ENCODE measurements at regions of chr13 and their contacts with region 1.

Region 1: DNA sequence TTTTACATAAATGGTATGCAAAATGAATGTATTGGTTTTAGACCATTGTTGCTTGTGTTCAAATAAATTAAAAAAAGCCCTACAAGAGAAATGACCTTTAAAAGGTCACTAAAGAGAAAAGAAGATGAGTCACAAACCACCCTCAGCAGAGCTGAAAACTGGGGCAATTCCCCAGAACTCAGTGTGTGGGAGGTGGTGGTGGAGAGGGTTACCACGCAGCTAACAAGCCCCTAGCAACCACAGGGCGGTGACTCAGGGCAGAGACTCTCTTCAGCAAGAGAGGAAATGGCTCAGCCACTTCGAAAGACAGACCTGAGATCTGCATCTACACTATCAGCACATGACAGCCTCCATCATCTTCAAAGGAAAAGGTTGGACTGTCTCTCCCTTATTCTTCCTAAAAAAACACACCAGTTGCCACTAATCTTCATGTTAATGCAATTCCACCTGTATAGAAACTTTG is 29.4 kb upstream of the NDFIP2 start:
- DNase-seq: peak; percentile 17 to 90 (median 51)
- ATAC-seq: peak; percentile 99
- H3K4me3 ChIP-seq: no peak overlapping the region
- H3K4me3 Mint-ChIP-seq: peak overlapping the region in 8 of 10 donors; percentile 10 to 84 (median 32)
- H3K27ac ChIP-seq: no peak overlapping the region
- H3K27ac Mint-ChIP-seq: peak overlapping the region; percentile 1 to 92 (median 43)
- H3K4me1 ChIP-seq: peaks cover 19 to 28% of the 10 kb centered on the region in 2 donors
- H3K4me1 Mint-ChIP-seq: peaks cover 24 to 64% (median 46%) of the 10 kb centered on the region in 7 donors
- H3K27me3 ChIP-seq: no peaks in the 10 kb centered on the region
- H3K27me3 Mint-ChIP-seq: no peaks in the 10 kb centered on the region

Region 2: GRCh38 chr13:79405829-79406596 is 45.5 kb before region 1 on chr13 and contains the start of gene RBM26:
- CTCF ChIA-PET with region 1: no interaction called
- POLR2A ChIA-PET with region 1: interaction called, 3 read pairs
- intact Hi-C with region 1: loop called in 1 of 2 experiments (anchors 1 kb)
- DNase-seq: peak; percentile 87 to 96 (median 93)
- ATAC-seq: peak; percentile 92
- H3K4me3 ChIP-seq: peak within 1 kb of the TSS; percentile 93
- H3K4me3 Mint-ChIP-seq: peak within 1 kb of the TSS in 5 of 10 donors; percentile 93 to 97 (median 95)
- H3K27ac ChIP-seq: peak within 1 kb of the TSS; percentile 91
- H3K27ac Mint-ChIP-seq: peak within 1 kb of the TSS in 5 of 9 donors; percentile 97 to 99 (median 99)
- H3K4me1 ChIP-seq: peaks cover 33 to 44% of the 10 kb centered on the region in 2 donors
- H3K4me1 Mint-ChIP-seq: peaks cover 31 to 49% (median 36%) of the 10 kb centered on the region in 7 donors
- H3K27me3 ChIP-seq: no peaks in the 10 kb centered on the region
- H3K27me3 Mint-ChIP-seq: no peaks in the 10 kb centered on the region
- total RNA-seq, gene RBM26: 75.4 to 136 (median 85.2) TPM

Region 3: DNA sequence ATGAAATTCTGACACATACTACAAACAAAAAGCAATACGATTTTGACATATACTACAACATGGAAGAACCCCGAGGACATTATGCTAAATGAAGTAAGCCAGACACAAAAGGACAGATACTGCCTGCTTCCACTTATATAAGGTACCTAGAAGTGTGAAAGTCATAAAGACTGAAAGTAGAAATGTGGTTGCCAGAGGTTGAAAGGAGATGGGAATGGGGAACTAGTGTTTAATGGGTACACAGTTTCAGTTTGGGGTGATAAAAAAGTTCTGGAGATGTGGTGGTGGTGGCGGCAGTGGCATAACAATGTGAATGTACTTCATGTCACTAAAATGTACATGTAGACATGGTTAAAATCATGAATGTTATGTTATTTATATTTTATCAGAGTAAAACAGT is 17.3 kb after region 1 on chr13:
- CTCF ChIA-PET with region 1: no interaction called
- POLR2A ChIA-PET with region 1: no interaction called
- intact Hi-C with region 1: no loop called
- DNase-seq: no peak
- ATAC-seq: no peak
- H3K4me3 ChIP-seq: no peak overlapping the region
- H3K4me3 Mint-ChIP-seq: peak overlapping the region in 1 of 10 donors; percentile 3
- H3K27ac ChIP-seq: no peak overlapping the region
- H3K27ac Mint-ChIP-seq: no peak overlapping the region
- H3K4me1 ChIP-seq: no peaks in the 10 kb centered on the region
- H3K4me1 Mint-ChIP-seq: peaks cover 0 to 17% (median 0%) of the 10 kb centered on the region in 7 donors
- H3K27me3 ChIP-seq: no peaks in the 10 kb centered on the region
- H3K27me3 Mint-ChIP-seq: peaks cover 0 to 3% (median 0%) of the 10 kb centered on the region in 5 donors

Region 4: GRCh38 chr13:79491715-79492114 is 40.2 kb after region 1 on chr13:
- CTCF ChIA-PET with region 1: no interaction called
- POLR2A ChIA-PET with region 1: no interaction called
- intact Hi-C with region 1: loop called (anchors 1 to 2 kb)
- DNase-seq: no peak
- ATAC-seq: no peak
- H3K4me3 ChIP-seq: no peak overlapping the region
- H3K4me3 Mint-ChIP-seq: peak overlapping the region in 8 of 10 donors; percentile 58 to 86 (median 68)
- H3K27ac ChIP-seq: no peak overlapping the region
- H3K27ac Mint-ChIP-seq: peak overlapping the region in 8 of 9 donors; percentile 2 to 93 (median 27)
- H3K4me1 ChIP-seq: peaks cover 0 to 17% of the 10 kb centered on the region in 2 donors
- H3K4me1 Mint-ChIP-seq: peaks cover 28 to 87% (median 78%) of the 10 kb centered on the region in 7 donors
- H3K27me3 ChIP-seq: no peaks in the 10 kb centered on the region
- H3K27me3 Mint-ChIP-seq: no peaks in the 10 kb centered on the region

Region 5: GRCh38 chr13:79522583-79522982 is 71.1 kb after region 1 on chr13:
- CTCF ChIA-PET with region 1: no interaction called
- POLR2A ChIA-PET with region 1: no interaction called
- intact Hi-C with region 1: loop called in 1 of 2 experiments (anchors 1 kb)
- DNase-seq: peak in 1 of 9 donors; percentile 40
- ATAC-seq: peak; percentile 74
- H3K4me3 ChIP-seq: no peak overlapping the region
- H3K4me3 Mint-ChIP-seq: peak overlapping the region in 1 of 10 donors; percentile 84
- H3K27ac ChIP-seq: no peak overlapping the region
- H3K27ac Mint-ChIP-seq: peak overlapping the region in 1 of 9 donors; percentile 91
- H3K4me1 ChIP-seq: peaks cover 0 to 7% of the 10 kb centered on the region in 2 donors
- H3K4me1 Mint-ChIP-seq: peaks cover 0 to 41% (median 13%) of the 10 kb centered on the region in 7 donors
- H3K27me3 ChIP-seq: no peaks in the 10 kb centered on the region
- H3K27me3 Mint-ChIP-seq: no peaks in the 10 kb centered on the region

Region 6: DNA sequence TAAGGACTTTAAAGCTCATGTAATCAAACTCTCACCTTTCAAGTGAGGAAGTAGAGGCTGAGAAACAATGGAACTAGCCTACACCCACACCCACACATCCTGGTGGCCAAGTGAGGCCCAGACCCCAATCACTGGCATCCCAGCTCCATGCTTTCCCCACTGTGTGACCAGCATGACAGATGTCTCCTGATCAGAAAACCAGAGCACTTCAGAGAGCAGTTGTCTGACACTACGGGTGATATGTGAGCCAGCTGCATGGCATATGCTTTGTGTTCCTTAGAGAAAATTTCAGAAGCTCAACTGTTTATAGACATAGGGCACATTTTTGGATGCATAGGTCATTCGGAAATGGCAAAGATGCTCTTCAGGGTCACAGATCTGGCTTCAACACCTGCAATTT is 344.6 kb after region 1 on chr13:
- CTCF ChIA-PET with region 1: no interaction called
- POLR2A ChIA-PET with region 1: no interaction called
- intact Hi-C with region 1: no loop called
- DNase-seq: no peak
- ATAC-seq: no peak
- H3K4me3 ChIP-seq: no peak overlapping the region
- H3K4me3 Mint-ChIP-seq: no peak overlapping the region
- H3K27ac ChIP-seq: no peak overlapping the region
- H3K27ac Mint-ChIP-seq: no peak overlapping the region
- H3K4me1 ChIP-seq: no peaks in the 10 kb centered on the region
- H3K4me1 Mint-ChIP-seq: no peaks in the 10 kb centered on the region
- H3K27me3 ChIP-seq: no peaks in the 10 kb centered on the region
- H3K27me3 Mint-ChIP-seq: no peaks in the 10 kb centered on the region